ENCODE measurements at regions of chr14 and their contacts with region 1.

Region 1: GRCh38 chr14:60184146-60184904 is 19.1 kb upstream of the DHRS7 start:
- DNase-seq: peak; percentile 85
- ATAC-seq: peak; percentile 69
- H3K4me3 ChIP-seq: peak overlapping the region; percentile 34 to 83 (median 59)
- H3K4me3 Mint-ChIP-seq: peak overlapping the region; percentile 78
- H3K27ac ChIP-seq: peak overlapping the region; percentile 69 to 81
- H3K27ac Mint-ChIP-seq: peak overlapping the region; percentile 60
- H3K4me1 ChIP-seq: peaks cover 9 to 12% of the 10 kb centered on the region in 2 donors
- H3K4me1 Mint-ChIP-seq: peaks cover 16% of the 10 kb centered on the region
- H3K27me3 ChIP-seq: no peaks in the 10 kb centered on the region
- H3K27me3 Mint-ChIP-seq: no peaks in the 10 kb centered on the region
- CTCF ChIP-seq: peak; percentile 98

Region 2: DNA sequence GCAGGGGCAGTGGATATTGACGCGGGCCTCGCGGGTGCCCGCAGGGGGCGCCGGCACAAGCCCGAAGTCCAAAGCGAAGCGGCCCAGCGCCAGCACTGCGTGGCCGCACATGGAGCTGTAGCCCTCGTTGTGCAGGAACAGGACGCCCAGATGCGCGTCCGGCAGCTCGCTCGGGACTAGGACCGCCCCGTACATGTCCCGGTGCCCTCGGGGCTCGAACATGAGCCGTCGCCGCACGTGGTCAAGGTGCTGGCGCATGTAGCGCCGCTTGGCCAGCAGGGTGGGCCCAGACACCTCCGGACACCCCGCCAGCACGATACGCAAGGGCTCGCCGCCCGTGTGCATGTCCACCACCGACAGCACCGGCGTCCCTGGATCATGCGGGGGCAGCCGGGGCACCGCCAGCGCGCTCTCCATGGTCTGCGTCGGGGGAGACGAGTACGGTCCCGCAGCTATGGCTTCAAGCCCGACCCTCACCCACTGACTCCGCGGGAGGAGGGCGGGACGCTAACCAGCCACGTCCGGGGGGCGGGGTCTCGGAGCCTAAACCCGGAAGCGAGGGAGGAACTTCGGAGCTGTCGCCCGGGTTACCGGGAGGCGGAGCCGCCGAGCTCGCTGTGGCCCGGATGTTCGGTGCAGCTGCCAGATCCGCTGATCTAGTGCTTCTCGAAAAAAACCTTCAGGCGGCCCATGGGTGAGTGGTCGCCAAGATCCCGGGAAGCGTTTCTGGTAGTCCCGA is 700.3 kb before region 1 on chr14 and contains the starts of genes JKAMP and L3HYPDH:
- CTCF ChIA-PET with region 1: interaction called, 7 read pairs
- POLR2A ChIA-PET with region 1: no interaction called
- intact Hi-C with region 1: loop called (anchors 1 kb)
- DNase-seq: peak; percentile 96
- ATAC-seq: peak; percentile 92
- H3K4me3 ChIP-seq: peak within 1 kb of the TSS; percentile 83 to 97 (median 93)
- H3K4me3 Mint-ChIP-seq: peak within 1 kb of the TSS; percentile 96
- H3K27ac ChIP-seq: peak within 1 kb of the TSS; percentile 57 to 79
- H3K27ac Mint-ChIP-seq: peak within 1 kb of the TSS; percentile 90
- H3K4me1 ChIP-seq: peaks cover 36 to 40% of the 10 kb centered on the region in 2 donors
- H3K4me1 Mint-ChIP-seq: peaks cover 56% of the 10 kb centered on the region
- H3K27me3 ChIP-seq: no peaks in the 10 kb centered on the region
- H3K27me3 Mint-ChIP-seq: no peaks in the 10 kb centered on the region
- CTCF ChIP-seq: peak; percentile 70
- total RNA-seq, gene JKAMP: 25.7 and 30.3 TPM in 2 replicates
- total RNA-seq, gene L3HYPDH: 67.3 and 74.5 TPM in 2 replicates

Region 3: GRCh38 chr14:59576332-59577294 is 607.7 kb before region 1 on chr14 and contains the start of gene CCDC175:
- CTCF ChIA-PET with region 1: no interaction called
- POLR2A ChIA-PET with region 1: no interaction called
- intact Hi-C with region 1: loop called (anchors 5 kb)
- DNase-seq: peak; percentile 83
- ATAC-seq: peak; percentile 90
- H3K4me3 ChIP-seq: peak within 1 kb of the TSS; percentile 26 to 62 (median 56)
- H3K4me3 Mint-ChIP-seq: peak within 1 kb of the TSS; percentile 75
- H3K27ac ChIP-seq: peak within 1 kb of the TSS in 1 of 2 donors; percentile 20
- H3K27ac Mint-ChIP-seq: no peak within 1 kb of the TSS
- H3K4me1 ChIP-seq: peaks cover 10 to 13% of the 10 kb centered on the region in 2 donors
- H3K4me1 Mint-ChIP-seq: peaks cover 13% of the 10 kb centered on the region
- H3K27me3 ChIP-seq: peaks cover 0 to 15% (median 6%) of the 10 kb centered on the region in 4 experiments
- H3K27me3 Mint-ChIP-seq: peaks cover 22% of the 10 kb centered on the region
- CTCF ChIP-seq: peak; percentile 91
- total RNA-seq, gene CCDC175: not detected in 2 replicates

Region 4: DNA sequence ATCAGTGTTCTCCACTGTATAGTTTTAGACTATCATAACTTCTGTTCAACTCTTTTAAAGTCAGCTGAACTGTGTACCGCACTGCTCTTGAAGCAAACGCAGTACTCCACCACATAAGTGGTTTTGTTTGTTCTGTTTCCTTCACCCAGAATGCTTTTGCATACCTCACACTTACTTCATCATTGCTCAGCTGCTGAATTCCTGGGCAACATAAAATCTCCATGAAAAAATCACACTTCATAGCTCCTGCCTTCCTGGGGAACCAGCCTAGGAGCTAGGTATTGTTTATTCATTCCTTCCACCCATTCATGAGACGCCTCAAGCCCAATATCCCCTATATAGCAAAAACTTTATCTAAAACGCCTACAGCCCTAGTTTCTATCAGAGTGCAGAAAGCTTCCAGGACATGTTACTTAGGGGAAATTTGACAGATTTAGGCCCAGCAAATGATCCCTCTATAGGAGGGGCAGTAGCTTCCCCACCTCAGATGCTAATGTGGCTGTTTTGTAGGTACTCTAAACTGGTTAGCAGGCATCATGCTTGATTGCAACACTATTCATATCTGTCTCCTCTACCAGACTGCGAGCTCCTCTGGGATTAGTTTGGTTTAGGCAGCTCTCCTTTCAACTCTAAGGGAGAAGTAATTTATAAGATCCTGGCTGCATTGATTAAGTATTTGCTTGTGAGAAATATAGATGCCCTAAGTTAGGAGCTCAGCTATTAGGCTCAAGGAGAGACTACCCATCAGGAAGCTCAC is 219.9 kb before region 1 on chr14:
- CTCF ChIA-PET with region 1: interaction called, 254 read pairs
- POLR2A ChIA-PET with region 1: interaction called, 3 read pairs
- intact Hi-C with region 1: loop called (anchors 1 kb)
- DNase-seq: no peak
- ATAC-seq: peak; percentile 11
- H3K4me3 ChIP-seq: peak overlapping the region in 3 of 5 experiments; percentile 18 to 63 (median 55)
- H3K4me3 Mint-ChIP-seq: peak overlapping the region; percentile 86
- H3K27ac ChIP-seq: peak overlapping the region; percentile 86
- H3K27ac Mint-ChIP-seq: peak overlapping the region; percentile 88
- H3K4me1 ChIP-seq: peaks cover 10 to 15% of the 10 kb centered on the region in 2 donors
- H3K4me1 Mint-ChIP-seq: peaks cover 13% of the 10 kb centered on the region
- H3K27me3 ChIP-seq: no peaks in the 10 kb centered on the region
- H3K27me3 Mint-ChIP-seq: no peaks in the 10 kb centered on the region
- CTCF ChIP-seq: no peak

Region 5: DNA sequence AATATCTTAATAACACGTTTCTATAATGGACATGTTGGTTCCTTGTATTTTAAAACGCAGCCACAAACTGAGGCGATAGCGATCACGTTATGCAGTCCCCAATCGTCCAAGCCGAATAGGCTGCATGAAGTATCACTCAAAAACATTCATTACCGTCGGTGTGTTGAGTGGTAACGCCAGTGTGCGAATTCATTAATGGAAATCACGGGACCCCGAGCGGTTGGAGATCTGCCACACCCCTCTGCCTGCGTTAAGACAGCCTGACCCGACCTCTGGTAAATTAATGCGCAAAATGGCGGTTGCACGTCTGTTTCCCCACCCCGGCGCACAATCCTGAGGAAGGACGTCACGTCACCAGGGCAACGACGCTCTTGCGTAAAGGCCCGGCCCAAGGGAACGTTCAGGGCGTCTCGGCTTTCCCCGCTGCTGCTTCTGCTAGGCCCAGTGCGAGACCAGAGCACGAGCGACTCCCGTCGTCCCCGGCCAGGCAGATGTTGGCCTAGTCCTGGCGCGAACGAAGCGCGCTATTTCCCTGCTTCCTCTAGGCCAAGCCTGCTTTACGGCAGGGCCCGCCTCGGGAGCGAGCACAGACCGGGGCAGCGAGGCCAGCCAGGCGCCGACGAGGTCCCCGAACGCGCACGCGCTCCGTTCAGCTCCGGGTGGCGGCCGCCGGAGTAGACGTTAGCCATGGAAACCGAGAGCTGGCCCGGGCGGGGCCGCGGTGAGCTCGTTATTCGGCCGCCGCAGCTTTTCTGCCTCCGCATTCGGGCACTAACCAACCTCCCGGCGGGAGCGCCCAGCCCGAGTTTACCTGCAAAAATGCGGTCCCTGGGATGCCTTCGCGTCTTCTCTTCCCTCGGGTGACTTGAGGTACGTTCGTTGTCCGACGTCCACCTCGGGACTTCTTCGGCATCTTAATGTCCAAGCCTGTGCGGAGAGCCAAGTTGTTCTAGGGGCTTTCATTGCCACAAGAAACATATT is 92.5 kb before region 1 on chr14 and contains the start of gene PCNX4:
- CTCF ChIA-PET with region 1: interaction called, 24 read pairs
- POLR2A ChIA-PET with region 1: no interaction called
- intact Hi-C with region 1: loop called (anchors 1 kb)
- DNase-seq: peak; percentile 99
- ATAC-seq: peak; percentile 90
- H3K4me3 ChIP-seq: peak within 1 kb of the TSS; percentile 72 to 93 (median 86)
- H3K4me3 Mint-ChIP-seq: peak within 1 kb of the TSS; percentile 94
- H3K27ac ChIP-seq: peak within 1 kb of the TSS; percentile 95 to 97
- H3K27ac Mint-ChIP-seq: peak within 1 kb of the TSS; percentile 98
- H3K4me1 ChIP-seq: peaks cover 19 to 21% of the 10 kb centered on the region in 2 donors
- H3K4me1 Mint-ChIP-seq: peaks cover 41% of the 10 kb centered on the region
- H3K27me3 ChIP-seq: peaks cover 0 to 4% (median 0%) of the 10 kb centered on the region in 4 experiments
- H3K27me3 Mint-ChIP-seq: no peaks in the 10 kb centered on the region
- CTCF ChIP-seq: no peak
- total RNA-seq, gene PCNX4: 53.4 and 70.1 TPM in 2 replicates

Region 6: GRCh38 chr14:60125918-60126317 is 58.4 kb before region 1 on chr14:
- CTCF ChIA-PET with region 1: no interaction called
- POLR2A ChIA-PET with region 1: no interaction called
- intact Hi-C with region 1: no loop called
- DNase-seq: no peak
- ATAC-seq: no peak
- H3K4me3 ChIP-seq: no peak overlapping the region
- H3K4me3 Mint-ChIP-seq: no peak overlapping the region
- H3K27ac ChIP-seq: no peak overlapping the region
- H3K27ac Mint-ChIP-seq: no peak overlapping the region
- H3K4me1 ChIP-seq: no peaks in the 10 kb centered on the region
- H3K4me1 Mint-ChIP-seq: no peaks in the 10 kb centered on the region
- H3K27me3 ChIP-seq: no peaks in the 10 kb centered on the region
- H3K27me3 Mint-ChIP-seq: no peaks in the 10 kb centered on the region
- CTCF ChIP-seq: no peak

Region 7: DNA sequence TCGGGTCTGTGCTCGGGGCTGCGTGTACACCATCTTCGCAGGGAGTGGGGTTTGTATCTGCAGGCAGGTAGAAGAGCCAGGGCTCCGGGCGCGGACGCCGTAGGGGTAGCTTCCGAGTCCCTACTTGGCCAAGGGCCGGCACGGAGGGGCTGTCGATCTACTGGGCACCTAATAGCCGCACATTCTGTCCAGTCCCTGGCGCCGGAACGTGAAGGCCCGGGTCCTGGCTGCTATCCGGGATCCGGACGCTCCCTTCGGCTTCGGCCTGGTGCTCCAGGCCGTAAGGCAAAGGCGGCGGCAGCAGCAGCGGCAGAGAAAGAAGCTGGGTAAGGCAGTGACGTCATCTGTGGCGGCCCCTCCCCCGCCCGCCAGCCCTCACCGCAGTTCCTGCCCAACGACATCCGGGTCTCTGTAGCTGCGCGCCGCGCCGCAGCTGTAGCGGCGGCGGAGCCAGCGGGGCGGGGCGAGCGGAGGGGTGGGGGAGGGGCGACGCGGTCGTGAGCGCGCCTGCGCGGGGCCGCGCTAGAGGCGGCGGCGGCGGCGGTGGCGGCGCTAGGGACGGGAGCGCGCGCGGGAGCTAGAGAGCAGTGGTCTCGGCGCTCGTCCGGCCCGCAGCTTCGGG is 64.5 kb after region 1 on chr14 and contains the start of gene PPM1A:
- CTCF ChIA-PET with region 1: interaction called, 21 read pairs
- POLR2A ChIA-PET with region 1: interaction called, 3 read pairs
- intact Hi-C with region 1: loop called (anchors 1 kb)
- DNase-seq: peak; percentile 99
- ATAC-seq: peak; percentile 72
- H3K4me3 ChIP-seq: peak within 1 kb of the TSS; percentile 86 to 96 (median 92)
- H3K4me3 Mint-ChIP-seq: peak within 1 kb of the TSS; percentile 99
- H3K27ac ChIP-seq: peak within 1 kb of the TSS; percentile 100
- H3K27ac Mint-ChIP-seq: peak within 1 kb of the TSS; percentile 100
- H3K4me1 ChIP-seq: peaks cover 16 to 24% of the 10 kb centered on the region in 2 donors
- H3K4me1 Mint-ChIP-seq: peaks cover 47% of the 10 kb centered on the region
- H3K27me3 ChIP-seq: no peaks in the 10 kb centered on the region
- H3K27me3 Mint-ChIP-seq: no peaks in the 10 kb centered on the region
- CTCF ChIP-seq: no peak
- total RNA-seq, gene PPM1A: 49.3 and 59.0 TPM in 2 replicates

Region 8: GRCh38 chr14:60561845-60562746 is 377.8 kb after region 1 on chr14:
- CTCF ChIA-PET with region 1: no interaction called
- POLR2A ChIA-PET with region 1: no interaction called
- intact Hi-C with region 1: loop called (anchors 10 kb)
- DNase-seq: peak; percentile 10
- ATAC-seq: no peak
- H3K4me3 ChIP-seq: no peak overlapping the region
- H3K4me3 Mint-ChIP-seq: no peak overlapping the region
- H3K27ac ChIP-seq: no peak overlapping the region
- H3K27ac Mint-ChIP-seq: no peak overlapping the region
- H3K4me1 ChIP-seq: no peaks in the 10 kb centered on the region
- H3K4me1 Mint-ChIP-seq: peaks cover 3% of the 10 kb centered on the region
- H3K27me3 ChIP-seq: no peaks in the 10 kb centered on the region
- H3K27me3 Mint-ChIP-seq: peaks cover 8% of the 10 kb centered on the region
- CTCF ChIP-seq: peak; percentile 33

Measured in B cell (primary cell).